ENCODE measurements at regions of chr13 and their contacts with region 1.

Region 1: DNA sequence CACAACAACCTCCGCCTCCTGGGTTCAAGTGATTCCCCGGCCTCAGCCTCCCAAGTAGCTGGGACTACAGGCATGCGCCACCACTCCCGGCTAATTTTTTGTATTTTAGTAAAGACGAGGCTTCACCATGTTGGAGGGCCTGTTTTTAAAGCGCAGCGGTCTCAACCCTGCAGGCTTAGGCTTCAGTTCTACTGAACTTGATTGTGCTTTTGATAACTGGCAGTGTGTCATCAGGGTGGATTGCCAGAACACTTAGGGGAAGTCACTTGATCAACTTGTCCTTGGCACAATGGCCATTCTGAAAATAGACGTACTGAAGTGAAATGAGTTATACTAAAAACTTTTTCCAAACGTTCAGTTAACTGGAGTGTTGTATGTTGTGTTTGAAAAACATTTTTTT is 472.2 kb downstream of the KLF5 start:
- DNase-seq: no peak
- H3K4me3 ChIP-seq: no peak overlapping the region
- H3K27ac ChIP-seq: no peak overlapping the region
- H3K4me1 ChIP-seq: no peaks in the 10 kb centered on the region
- H3K27me3 ChIP-seq: no peaks in the 10 kb centered on the region
- CTCF ChIP-seq: no peak
- EP300 ChIP-seq: no peak
- POLR2A ChIP-seq: no peak

Region 2: GRCh38 chr13:73325711-73326558 is 205.1 kb before region 1 on chr13:
- intact Hi-C with region 1: no loop called
- DNase-seq: no peak
- H3K4me3 ChIP-seq: no peak overlapping the region
- H3K27ac ChIP-seq: no peak overlapping the region
- H3K4me1 ChIP-seq: no peaks in the 10 kb centered on the region
- H3K27me3 ChIP-seq: no peaks in the 10 kb centered on the region
- CTCF ChIP-seq: no peak
- EP300 ChIP-seq: no peak
- POLR2A ChIP-seq: no peak

Region 3: GRCh38 chr13:73481886-73482445 is 49.0 kb before region 1 on chr13:
- intact Hi-C with region 1: no loop called
- DNase-seq: no peak
- H3K4me3 ChIP-seq: no peak overlapping the region
- H3K27ac ChIP-seq: no peak overlapping the region
- H3K4me1 ChIP-seq: no peaks in the 10 kb centered on the region
- H3K27me3 ChIP-seq: no peaks in the 10 kb centered on the region
- CTCF ChIP-seq: no peak
- EP300 ChIP-seq: no peak
- POLR2A ChIP-seq: no peak

Region 4: DNA sequence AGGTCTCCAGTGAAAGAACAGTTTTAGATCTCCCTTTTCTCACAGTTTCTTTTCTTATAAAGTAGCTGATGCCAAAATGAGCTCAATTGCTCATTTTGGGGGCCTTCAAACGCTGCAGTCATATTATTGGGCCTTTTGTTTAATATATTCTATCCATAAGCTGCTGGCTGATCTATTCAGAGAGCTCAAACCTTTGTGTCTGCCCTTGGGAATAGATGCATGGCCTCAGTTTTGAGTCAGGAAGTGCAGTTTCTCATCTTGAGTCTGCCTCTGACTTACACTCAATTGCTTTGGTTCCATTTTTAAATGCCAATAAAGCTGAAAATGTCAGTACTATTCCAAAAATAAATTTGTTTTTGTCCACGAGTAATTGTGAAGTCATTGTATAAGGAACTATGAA is 134.2 kb after region 1 on chr13:
- intact Hi-C with region 1: loop called in 1 of 4 experiments (anchors 5 kb)
- DNase-seq: no peak
- H3K4me3 ChIP-seq: no peak overlapping the region
- H3K27ac ChIP-seq: no peak overlapping the region
- H3K4me1 ChIP-seq: no peaks in the 10 kb centered on the region
- H3K27me3 ChIP-seq: no peaks in the 10 kb centered on the region
- CTCF ChIP-seq: no peak
- EP300 ChIP-seq: no peak
- POLR2A ChIP-seq: no peak